ENCODE measurements at regions of chr21 and their contacts with region 1.

Region 1: GRCh38 chr21:41816220-41817165 is 49.6 kb upstream of the RIPK4 start:
- DNase-seq: peak; percentile 31 to 78
- H3K4me3 ChIP-seq: no peak overlapping the region
- H3K27ac ChIP-seq: no peak overlapping the region
- H3K4me1 ChIP-seq: peaks cover 0 to 1% (median 0%) of the 10 kb centered on the region in 4 experiments; a peak in 1 of 7 replicates
- H3K27me3 ChIP-seq: no peaks in the 10 kb centered on the region
- CTCF ChIP-seq: peak; percentile 85 to 89 (median 88)
- EP300 ChIP-seq: no peak
- POLR2A ChIP-seq: no peak
- RAD21 ChIP-seq: peak; percentile 77 to 83

Region 2: DNA sequence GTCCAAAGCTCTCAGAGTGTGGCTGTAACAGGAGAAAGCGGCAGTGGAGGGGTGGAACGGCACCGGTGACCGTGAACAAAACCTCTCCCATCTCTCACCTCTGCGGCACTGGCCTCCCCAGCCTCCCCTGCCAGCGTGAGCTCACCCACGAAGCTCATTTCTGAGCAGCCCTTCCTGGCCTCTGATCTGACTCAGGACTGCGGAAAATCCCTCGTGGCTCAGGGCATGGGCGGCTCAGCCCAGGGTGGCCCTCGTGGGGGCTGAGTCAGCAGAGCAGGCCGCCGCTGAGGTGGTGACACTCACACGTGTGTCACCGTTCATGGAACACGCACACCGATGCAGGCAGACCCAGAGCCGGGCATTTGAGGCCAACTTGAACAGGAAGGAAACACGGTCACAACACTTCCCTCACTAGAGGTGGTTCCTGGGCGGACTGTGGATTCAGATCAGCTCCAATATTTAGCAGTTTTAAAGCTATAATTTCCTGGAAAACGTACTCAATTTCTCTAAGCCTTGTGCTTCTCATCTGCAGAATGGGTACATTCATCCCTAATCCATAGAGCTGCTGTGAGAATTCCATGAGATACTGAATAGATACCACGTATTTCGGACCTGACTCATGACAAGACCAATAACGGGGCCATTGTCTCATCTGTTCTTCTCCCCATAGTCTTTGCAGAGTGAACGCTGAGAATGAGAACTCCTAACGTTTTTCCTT is 193.5 kb before region 1 on chr21:
- CTCF ChIA-PET with region 1: interaction called, 11 read pairs
- POLR2A ChIA-PET with region 1: no interaction called
- DNase-seq: no peak
- H3K4me3 ChIP-seq: no peak overlapping the region
- H3K27ac ChIP-seq: no peak overlapping the region
- H3K4me1 ChIP-seq: no peaks in the 10 kb centered on the region
- H3K27me3 ChIP-seq: no peaks in the 10 kb centered on the region
- CTCF ChIP-seq: no peak
- EP300 ChIP-seq: no peak
- POLR2A ChIP-seq: no peak
- RAD21 ChIP-seq: no peak

Region 3: GRCh38 chr21:41745971-41746743 is 70.3 kb before region 1 on chr21:
- CTCF ChIA-PET with region 1: interaction called, 12 read pairs
- POLR2A ChIA-PET with region 1: no interaction called
- DNase-seq: no peak
- H3K4me3 ChIP-seq: no peak overlapping the region
- H3K27ac ChIP-seq: no peak overlapping the region; the same call in 1 of the 2 replicates
- H3K4me1 ChIP-seq: peaks cover 0 to 7% (median under 1%) of the 10 kb centered on the region in 4 experiments; a peak in 2 of 7 replicates
- H3K27me3 ChIP-seq: no peaks in the 10 kb centered on the region; a peak in 1 of 7 replicates
- CTCF ChIP-seq: peak; percentile 56 to 63 (median 60)
- EP300 ChIP-seq: no peak
- POLR2A ChIP-seq: no peak
- RAD21 ChIP-seq: peak; percentile 38 to 61; a peak in 3 of 4 replicates

Region 4: DNA sequence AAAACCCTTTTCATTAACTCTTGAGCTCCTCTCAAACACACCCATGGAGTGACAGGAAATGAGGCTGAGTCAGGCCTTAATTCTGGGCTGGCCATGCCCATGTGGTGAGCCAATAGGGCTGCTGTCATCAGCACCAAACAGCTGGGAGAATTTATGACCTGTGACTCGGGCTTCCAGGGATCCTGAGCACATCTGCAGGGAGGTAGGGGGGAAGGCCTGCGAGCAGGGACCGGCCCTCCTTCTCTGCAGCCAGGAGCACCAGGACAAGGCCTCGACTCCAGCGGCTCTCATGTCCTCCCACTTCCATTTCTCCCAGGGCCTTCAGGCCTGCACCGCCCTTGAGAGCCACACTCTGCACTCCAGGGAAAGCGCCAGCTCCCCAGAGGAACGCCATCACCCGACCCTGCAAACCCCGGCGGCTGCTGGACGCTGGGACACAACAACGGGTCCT is 64.2 kb before region 1 on chr21:
- CTCF ChIA-PET with region 1: interaction called, 10 read pairs
- POLR2A ChIA-PET with region 1: no interaction called
- DNase-seq: no peak
- H3K4me3 ChIP-seq: no peak overlapping the region
- H3K27ac ChIP-seq: no peak overlapping the region
- H3K4me1 ChIP-seq: peaks cover 9 to 36% (median 22%) of the 10 kb centered on the region in 4 experiments
- H3K27me3 ChIP-seq: no peaks in the 10 kb centered on the region; a peak in 2 of 7 replicates
- CTCF ChIP-seq: no peak
- EP300 ChIP-seq: no peak
- POLR2A ChIP-seq: no peak
- RAD21 ChIP-seq: no peak

Region 5: GRCh38 chr21:41832596-41833496 is 16.4 kb after region 1 on chr21:
- CTCF ChIA-PET with region 1: interaction called, 21 read pairs
- POLR2A ChIA-PET with region 1: interaction called, 3 read pairs
- DNase-seq: no peak
- H3K4me3 ChIP-seq: no peak overlapping the region
- H3K27ac ChIP-seq: no peak overlapping the region
- H3K4me1 ChIP-seq: peaks cover 2 to 12% (median 7%) of the 10 kb centered on the region in 4 experiments; a peak in 6 of 7 replicates
- H3K27me3 ChIP-seq: no peaks in the 10 kb centered on the region
- CTCF ChIP-seq: peak in 2 of 3 experiments; percentile 4 to 7; a peak in 2 of 4 replicates
- EP300 ChIP-seq: no peak
- POLR2A ChIP-seq: no peak
- RAD21 ChIP-seq: no peak

Region 6: DNA sequence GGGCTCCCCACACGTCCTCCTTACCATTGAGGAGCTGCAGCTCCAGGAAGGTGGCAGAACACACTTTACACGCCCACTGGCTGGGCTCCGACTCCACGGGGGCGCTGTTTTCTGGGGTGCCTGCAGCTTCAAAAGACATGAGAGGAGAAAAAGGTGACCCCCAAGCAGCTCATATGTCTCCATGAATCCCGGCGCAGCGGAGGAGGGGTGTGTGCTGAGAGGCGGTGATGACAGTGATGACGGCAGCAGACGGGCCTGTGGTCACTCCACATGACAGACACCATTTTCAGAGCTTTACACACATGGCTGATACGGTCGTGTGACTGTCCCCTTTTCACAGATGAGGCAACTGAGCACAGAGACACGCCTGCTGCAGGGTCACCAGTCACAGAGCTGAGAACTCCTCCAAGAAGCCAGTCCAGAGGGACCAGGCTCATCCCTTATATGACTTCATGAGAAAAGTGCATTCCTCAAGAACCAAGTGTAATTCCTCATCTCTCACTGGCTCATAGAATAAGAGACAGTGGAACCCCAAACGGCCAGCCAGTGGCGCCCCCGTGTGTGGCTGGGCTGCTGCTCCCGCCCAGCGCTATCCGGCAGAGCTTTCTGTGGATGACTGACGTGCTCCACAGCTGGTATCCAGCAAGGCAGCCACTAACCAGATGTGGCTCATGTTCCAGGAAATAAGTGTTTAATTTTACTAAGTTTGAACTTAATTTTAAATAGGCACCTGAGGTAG is 30.7 kb after region 1 on chr21:
- CTCF ChIA-PET with region 1: interaction called, 15 read pairs
- POLR2A ChIA-PET with region 1: no interaction called
- DNase-seq: peak in 1 of 2 experiments; percentile 54
- H3K4me3 ChIP-seq: no peak overlapping the region
- H3K27ac ChIP-seq: no peak overlapping the region
- H3K4me1 ChIP-seq: peaks cover 0 to 2% (median 0%) of the 10 kb centered on the region in 4 experiments; a peak in 1 of 7 replicates
- H3K27me3 ChIP-seq: no peaks in the 10 kb centered on the region
- CTCF ChIP-seq: peak; percentile 55 to 65 (median 62)
- EP300 ChIP-seq: no peak
- POLR2A ChIP-seq: no peak
- RAD21 ChIP-seq: peak; percentile 61

Region 7: GRCh38 chr21:41916888-41917433 is 100.5 kb after region 1 on chr21:
- CTCF ChIA-PET with region 1: interaction called, 10 read pairs
- POLR2A ChIA-PET with region 1: no interaction called
- DNase-seq: no peak
- H3K4me3 ChIP-seq: no peak overlapping the region
- H3K27ac ChIP-seq: no peak overlapping the region
- H3K4me1 ChIP-seq: no peaks in the 10 kb centered on the region; a peak in 1 of 7 replicates
- H3K27me3 ChIP-seq: no peaks in the 10 kb centered on the region
- CTCF ChIP-seq: no peak
- EP300 ChIP-seq: no peak
- POLR2A ChIP-seq: no peak
- RAD21 ChIP-seq: no peak; a peak in 1 of 4 replicates

Measured in H1 (cell line).